T-cell (primary cell): ENCODE measurements at regions of chr20 and their contacts with region 1.

Region 1: DNA sequence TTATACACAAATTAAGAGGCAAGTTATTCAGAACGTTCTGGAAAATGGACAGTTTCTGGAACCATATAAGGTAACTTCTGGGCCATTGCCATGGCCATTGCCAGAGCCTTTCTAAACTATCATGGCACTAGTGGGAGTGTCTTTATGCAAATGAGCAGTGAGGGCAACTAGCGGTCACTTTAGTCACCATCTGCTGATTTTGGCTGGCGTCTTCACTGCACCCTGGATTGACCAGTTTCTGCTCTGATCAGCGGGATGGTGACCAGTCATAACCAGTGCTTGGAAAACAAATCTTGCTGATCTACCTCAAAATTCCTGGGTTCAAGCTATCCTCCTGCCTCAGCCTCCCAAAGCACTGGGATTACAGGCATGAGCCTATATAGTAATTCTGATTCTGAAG is 7.3 kb upstream of the SNTA1 start:
- DNase-seq: no peak
- ATAC-seq: no peak
- H3K4me3 ChIP-seq: no peak overlapping the region
- H3K4me3 Mint-ChIP-seq: no peak overlapping the region
- H3K27ac ChIP-seq: no peak overlapping the region
- H3K27ac Mint-ChIP-seq: no peak overlapping the region
- H3K4me1 ChIP-seq: no peaks in the 10 kb centered on the region
- H3K4me1 Mint-ChIP-seq: peaks cover 0 to 6% (median 0%) of the 10 kb centered on the region in 3 donors
- H3K27me3 ChIP-seq: no peaks in the 10 kb centered on the region
- H3K27me3 Mint-ChIP-seq: no peaks in the 10 kb centered on the region

Region 2: DNA sequence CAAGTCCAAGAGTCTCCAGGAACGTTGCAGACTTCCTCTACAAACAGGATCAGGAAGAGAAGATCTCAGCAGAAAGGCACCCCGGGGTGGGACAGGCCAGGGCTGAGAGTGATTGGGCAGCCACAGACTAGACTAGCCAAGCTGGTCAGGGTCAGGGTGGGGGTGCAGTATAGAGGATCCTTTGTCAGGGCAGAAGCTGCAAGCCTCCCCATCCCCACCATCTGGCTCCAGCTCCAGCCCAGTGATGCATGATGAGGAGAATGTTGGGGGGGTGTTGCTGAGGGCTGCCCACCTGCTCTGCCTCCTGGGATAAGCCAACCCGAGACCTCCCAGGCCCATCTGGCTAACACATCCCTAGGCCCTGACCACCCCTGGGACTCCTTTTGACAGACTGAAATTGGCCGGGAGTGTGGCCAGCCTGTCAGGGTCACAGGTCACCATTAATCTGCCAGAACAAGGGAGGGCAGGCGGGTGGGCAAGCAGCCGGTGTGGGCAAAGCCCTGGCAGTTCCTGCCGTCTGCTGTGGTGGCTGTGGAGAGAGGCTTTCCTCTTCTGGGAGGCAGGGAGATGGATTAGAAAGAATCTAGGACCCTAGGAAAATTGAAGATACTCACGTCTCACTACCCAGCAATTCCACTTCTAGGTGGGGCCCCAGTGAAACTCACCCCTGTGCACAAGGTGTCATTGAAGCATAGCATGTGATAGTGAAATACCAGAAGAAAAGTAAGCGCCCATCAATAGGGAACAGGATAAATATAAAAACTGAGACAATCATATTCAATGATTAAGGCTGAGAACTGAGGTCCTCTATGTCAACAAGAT is 14.8 kb after region 1 on chr20:
- CTCF ChIA-PET with region 1: interaction called in 1 of 2 experiments, 10 read pairs
- POLR2A ChIA-PET with region 1: no interaction called
- DNase-seq: no peak
- ATAC-seq: no peak
- H3K4me3 ChIP-seq: no peak overlapping the region
- H3K4me3 Mint-ChIP-seq: no peak overlapping the region
- H3K27ac ChIP-seq: no peak overlapping the region
- H3K27ac Mint-ChIP-seq: no peak overlapping the region
- H3K4me1 ChIP-seq: no peaks in the 10 kb centered on the region
- H3K4me1 Mint-ChIP-seq: peaks cover 0 to 2% (median 0%) of the 10 kb centered on the region in 3 donors
- H3K27me3 ChIP-seq: no peaks in the 10 kb centered on the region
- H3K27me3 Mint-ChIP-seq: no peaks in the 10 kb centered on the region